ENCODE measurements at regions of chr20 and their contacts with region 1.

Region 1: GRCh38 chr20:45011108-45011526 is 44.8 kb downstream of the STK4 start:
- DNase-seq: peak; percentile 62
- ATAC-seq: peak; percentile 57 to 64

Region 2: DNA sequence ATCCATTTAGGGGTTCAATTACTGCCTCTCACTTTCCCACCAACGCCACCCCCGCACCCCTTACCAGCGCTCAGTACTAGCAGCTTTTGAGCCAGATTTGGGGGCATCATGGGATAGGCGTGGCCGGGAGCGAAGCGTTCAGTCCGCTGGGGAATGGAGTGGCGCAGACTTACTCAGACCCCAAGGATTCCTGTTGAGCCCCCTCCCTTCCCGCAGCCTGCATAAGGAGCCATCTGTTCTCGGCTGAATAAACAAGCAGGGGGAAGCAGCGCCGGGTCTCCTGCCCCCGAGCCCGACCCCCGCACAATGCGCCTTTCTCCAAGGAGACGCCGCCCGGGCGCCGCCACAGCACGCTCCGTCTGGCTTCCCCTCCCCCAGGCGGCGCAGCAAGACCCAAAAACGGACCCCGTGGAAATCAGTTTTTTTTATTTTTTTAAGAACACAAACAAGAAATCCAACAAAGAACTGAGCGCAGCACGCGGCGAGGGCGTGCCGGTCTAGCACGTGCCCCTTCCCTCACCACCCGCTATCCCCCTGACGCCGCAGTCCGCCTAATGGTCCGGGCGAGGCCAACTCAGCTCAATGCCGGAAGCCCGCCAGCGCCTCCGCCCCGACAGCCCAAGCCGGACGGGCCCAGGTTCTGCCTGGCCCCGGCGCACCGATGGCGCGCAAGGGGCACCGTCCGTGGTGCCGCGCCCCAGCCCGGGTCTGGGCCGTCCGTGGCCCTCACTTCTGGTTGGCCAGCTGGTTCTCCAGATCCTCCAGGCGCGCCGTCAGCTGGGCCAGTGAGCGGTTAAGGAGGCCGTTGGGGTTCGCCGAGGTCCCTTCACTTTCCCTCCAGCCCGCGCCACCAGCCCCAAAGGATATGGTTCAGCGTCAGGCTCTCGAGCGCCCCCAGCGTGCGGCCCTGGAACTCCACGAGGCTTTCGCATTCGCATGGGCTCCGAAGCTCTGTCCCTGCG is 282.2 kb after region 1 on chr20:
- intact Hi-C with region 1: loop called in 1 of 2 experiments (anchors 2 kb)
- DNase-seq: peak; percentile 88
- ATAC-seq: peak; percentile 80 to 91